Activated T-helper 2 cell treated with anti-CD3 and anti-CD28 coated beads, Interferon-gamma antibody, Interleukin-2, Interleukin-4, amounts not matched to agents 10 μg/mL and 5 μg/mL and 100 μg/mL, durations not matched to agents 14 hours and 24 hours and 36 hours (primary cell): ENCODE measurements at regions of chr16 and their contacts with region 1.

Region 1: DNA sequence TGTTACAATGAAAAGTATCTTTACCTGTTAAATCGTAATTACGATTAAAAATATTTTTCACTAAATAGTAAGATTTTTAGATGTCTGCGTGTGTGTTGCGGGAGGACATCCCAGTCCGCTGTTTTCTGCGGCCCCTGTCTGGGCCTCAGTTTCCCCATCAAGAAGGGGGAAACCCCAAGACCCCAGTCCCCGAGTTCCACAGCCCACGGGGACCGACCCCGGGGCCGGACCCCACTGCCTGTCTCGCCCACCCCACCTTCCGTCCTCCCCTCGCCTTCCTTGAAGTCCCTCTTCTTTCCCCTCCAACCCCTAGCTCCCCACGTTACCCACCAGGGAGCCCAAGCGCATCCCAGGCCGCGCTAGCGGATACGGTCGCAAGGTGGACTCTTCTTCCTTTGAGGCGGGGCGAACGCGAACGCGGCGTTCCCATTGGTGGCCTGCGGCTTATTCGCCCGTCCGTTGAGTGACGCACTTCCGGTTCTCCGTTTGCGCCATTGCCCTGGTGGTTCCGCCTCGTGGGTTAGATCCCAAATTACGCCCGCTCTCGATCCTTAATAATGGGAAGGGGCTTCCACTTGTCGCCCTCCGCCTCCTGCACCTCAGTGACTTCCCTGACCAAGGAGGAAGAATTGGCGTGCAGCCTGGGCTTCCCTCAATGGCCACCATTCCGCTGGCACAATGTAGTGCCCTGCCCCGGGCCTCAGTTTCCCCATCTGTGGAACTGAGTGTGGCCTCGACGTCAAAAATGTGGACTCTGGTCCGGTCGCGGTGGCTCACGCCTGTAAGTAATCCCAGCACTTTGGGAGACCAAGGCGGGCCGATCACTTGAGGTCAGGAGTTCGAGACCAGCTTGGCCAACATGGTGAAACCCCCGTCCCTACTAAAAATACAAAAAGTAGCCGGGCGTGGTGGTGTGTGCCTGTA is at the start of gene NSMCE1:
- DNase-seq: peak; percentile 93
- H3K4me3 Mint-ChIP-seq: peak within 1 kb of the TSS; percentile 98
- H3K27ac Mint-ChIP-seq: peak within 1 kb of the TSS; percentile 98
- H3K4me1 Mint-ChIP-seq: peaks cover 66% of the 10 kb centered on the region
- H3K27me3 Mint-ChIP-seq: no peaks in the 10 kb centered on the region
- total RNA-seq, gene NSMCE1: 186 and 189 TPM in 2 replicates

Region 2: DNA sequence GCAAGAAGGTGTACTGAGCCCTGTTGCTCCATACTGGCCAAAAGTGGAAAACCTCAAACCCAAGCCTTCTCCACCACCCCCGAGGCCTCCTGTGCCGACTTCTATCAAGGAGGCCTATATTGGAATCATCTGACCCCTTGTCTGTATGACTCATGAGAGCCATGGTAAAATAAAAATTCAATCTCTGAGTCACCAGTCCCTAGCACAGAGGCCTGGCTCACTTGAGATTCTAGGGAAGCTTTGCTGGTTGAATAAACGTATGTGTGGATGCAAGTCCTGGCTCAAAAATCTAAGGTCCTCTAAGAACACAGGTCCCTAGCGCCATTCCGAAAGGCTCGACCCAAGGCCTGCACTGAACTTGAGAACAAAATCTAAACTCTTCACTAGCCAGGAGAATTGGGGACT is 15.1 kb before region 1 on chr16:
- intact Hi-C with region 1: loop called (anchors 1 kb)
- DNase-seq: no peak
- H3K4me3 Mint-ChIP-seq: peak overlapping the region; percentile 54
- H3K27ac Mint-ChIP-seq: peak overlapping the region; percentile 97
- H3K4me1 Mint-ChIP-seq: peaks cover 82% of the 10 kb centered on the region
- H3K27me3 Mint-ChIP-seq: no peaks in the 10 kb centered on the region